Activated T-helper 2 cell treated with anti-CD3 and anti-CD28 coated beads, Interferon-gamma antibody, Interleukin-2, Interleukin-4, amounts not matched to agents 10 μg/mL and 5 μg/mL and 100 μg/mL, durations not matched to agents 14 hours and 24 hours and 36 hours (primary cell): ENCODE measurements at regions of chr2 and their contacts with region 1.

Region 1: GRCh38 chr2:39436592-39437510 is at the start of gene MAP4K3:
- DNase-seq: peak; percentile 66
- H3K4me3 Mint-ChIP-seq: peak within 1 kb of the TSS; percentile 89
- H3K27ac Mint-ChIP-seq: peak within 1 kb of the TSS; percentile 83
- H3K4me1 Mint-ChIP-seq: peaks cover 41% of the 10 kb centered on the region
- H3K27me3 Mint-ChIP-seq: no peaks in the 10 kb centered on the region
- total RNA-seq, gene MAP4K3: 19.3 and 22.7 TPM in 2 replicates

Region 2: DNA sequence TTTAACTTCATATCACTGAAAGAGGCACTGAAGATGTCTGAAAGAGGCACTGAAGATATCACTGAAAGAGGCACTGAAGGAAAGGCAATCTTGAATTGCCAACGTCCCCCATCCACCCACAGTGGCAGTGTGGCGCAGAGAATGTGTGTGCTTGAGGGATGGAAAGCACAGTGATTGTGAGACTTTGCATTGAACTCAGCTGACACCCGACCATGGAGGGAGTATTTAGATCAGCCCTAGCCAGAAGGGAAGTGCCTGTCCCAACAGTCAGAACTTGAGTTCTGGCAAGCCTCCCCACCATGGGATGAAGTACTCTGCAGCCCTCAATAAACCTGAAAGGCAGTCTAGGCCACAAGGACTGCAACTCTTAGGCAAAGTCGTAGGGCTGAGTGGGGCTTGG is 33.5 kb before region 1 on chr2:
- intact Hi-C with region 1: no loop called
- DNase-seq: no peak
- H3K4me3 Mint-ChIP-seq: no peak overlapping the region
- H3K27ac Mint-ChIP-seq: no peak overlapping the region
- H3K4me1 Mint-ChIP-seq: peaks cover 35% of the 10 kb centered on the region
- H3K27me3 Mint-ChIP-seq: no peaks in the 10 kb centered on the region

Region 3: GRCh38 chr2:39778962-39779851 is 342.4 kb after region 1 on chr2 and contains the start of gene THUMPD2:
- intact Hi-C with region 1: loop called (anchors 5 kb)
- DNase-seq: peak; percentile 65
- H3K4me3 Mint-ChIP-seq: peak within 1 kb of the TSS; percentile 88
- H3K27ac Mint-ChIP-seq: peak within 1 kb of the TSS; percentile 91
- H3K4me1 Mint-ChIP-seq: peaks cover 50% of the 10 kb centered on the region
- H3K27me3 Mint-ChIP-seq: no peaks in the 10 kb centered on the region
- total RNA-seq, gene THUMPD2: 19.0 and 19.4 TPM in 2 replicates